Mammary epithelial cell (primary cell): ENCODE measurements at regions of chr11 and their contacts with region 1.

Region 1: DNA sequence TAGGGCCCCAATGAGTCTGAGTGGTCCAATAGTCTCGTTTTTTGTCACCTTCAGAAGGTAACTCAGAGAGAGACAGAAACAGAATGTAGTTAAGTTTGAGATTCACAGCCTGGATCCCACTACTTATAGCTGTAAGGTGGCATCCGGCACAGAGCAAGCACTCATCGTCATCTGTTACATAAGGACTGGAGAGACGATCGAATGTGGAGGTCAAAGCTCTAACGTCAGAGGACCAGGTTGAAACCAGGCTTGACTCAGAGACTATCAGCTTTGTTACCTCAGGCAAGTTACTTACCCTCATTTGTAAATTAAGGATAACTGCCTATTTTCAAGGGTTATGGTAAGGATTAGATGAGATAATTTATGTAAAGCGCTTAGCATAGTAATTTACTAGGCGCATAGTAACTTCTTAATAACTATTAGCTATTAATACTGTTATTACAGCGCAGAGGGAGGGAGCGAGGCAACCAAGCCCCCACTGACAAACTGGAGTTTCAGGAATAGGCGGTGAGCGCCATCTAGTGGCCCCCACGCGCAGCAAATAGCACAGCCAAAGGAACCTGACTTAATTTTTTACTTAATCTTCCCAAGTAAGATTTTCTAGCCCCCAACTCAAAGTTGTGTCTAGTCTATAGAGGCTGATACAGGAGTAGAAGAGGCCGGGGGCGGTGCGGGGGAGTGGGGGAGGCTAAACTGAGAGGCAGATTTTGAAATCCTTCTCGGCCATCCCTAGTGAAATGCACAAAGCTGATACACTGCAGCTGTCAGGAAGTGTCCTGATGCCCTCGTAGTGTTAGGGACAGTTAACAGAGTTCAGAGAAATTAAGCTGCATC is 29.0 kb upstream of the API5 start:
- DNase-seq: peak; percentile 6
- H3K4me3 ChIP-seq: no peak overlapping the region
- H3K27ac ChIP-seq: no peak overlapping the region
- H3K4me1 ChIP-seq: no peaks in the 10 kb centered on the region
- H3K27me3 ChIP-seq: peaks cover 2% of the 10 kb centered on the region
- CTCF ChIP-seq: peak; percentile 81 to 88

Region 2: GRCh38 chr11:41461057-41461681 is 1821.7 kb before region 1 on chr11:
- CTCF ChIA-PET with region 1: no interaction called
- dilution Hi-C with region 1: no loop called
- in situ Hi-C with region 1: loop called in 1 of 2 experiments (anchors 25 kb)
- intact Hi-C with region 1: no loop called
- DNase-seq: peak; percentile 9
- H3K4me3 ChIP-seq: no peak overlapping the region
- H3K27ac ChIP-seq: no peak overlapping the region
- H3K4me1 ChIP-seq: no peaks in the 10 kb centered on the region
- H3K27me3 ChIP-seq: peaks cover 18% of the 10 kb centered on the region
- CTCF ChIP-seq: peak; percentile 71 to 75

Region 3: DNA sequence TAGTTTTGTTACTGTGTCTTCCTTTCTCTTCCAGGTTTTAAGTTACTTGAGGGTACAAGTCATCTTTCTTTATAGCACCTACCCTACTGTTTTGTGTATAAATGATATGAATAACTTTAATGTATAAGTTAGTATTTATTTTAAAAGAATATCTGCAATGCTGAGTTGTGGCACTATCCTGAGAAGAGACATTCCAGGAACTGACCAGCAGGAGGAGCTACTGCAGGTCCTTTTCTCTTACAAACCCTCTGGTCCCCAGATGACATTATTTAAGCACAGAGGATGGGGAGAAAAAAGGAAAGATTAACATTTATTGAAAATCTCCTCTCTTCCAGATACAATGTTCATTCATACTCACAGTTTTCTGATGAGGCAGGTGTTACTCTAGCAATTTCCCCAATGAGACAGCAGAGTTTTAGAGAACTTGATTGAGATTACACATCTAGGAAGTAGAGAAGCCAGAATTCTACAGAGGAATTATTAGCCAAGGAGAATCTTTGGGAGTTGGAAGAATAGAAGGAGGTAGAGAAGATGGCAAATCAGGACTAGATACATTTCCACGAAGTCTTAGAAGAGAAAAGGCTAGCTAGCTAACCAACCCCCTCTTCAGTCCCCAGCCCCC is 512.3 kb before region 1 on chr11:
- CTCF ChIA-PET with region 1: interaction called, 4 read pairs
- dilution Hi-C with region 1: no loop called
- in situ Hi-C with region 1: loop called in 1 of 2 experiments (anchors 25 kb)
- intact Hi-C with region 1: loop called (anchors 1 kb)
- DNase-seq: peak; percentile 2
- H3K4me3 ChIP-seq: no peak overlapping the region
- H3K27ac ChIP-seq: no peak overlapping the region
- H3K4me1 ChIP-seq: no peaks in the 10 kb centered on the region
- H3K27me3 ChIP-seq: no peaks in the 10 kb centered on the region
- CTCF ChIP-seq: peak; percentile 57 to 69

Region 4: GRCh38 chr11:42967653-42968375 is 315.0 kb before region 1 on chr11:
- CTCF ChIA-PET with region 1: no interaction called
- dilution Hi-C with region 1: no loop called
- in situ Hi-C with region 1: no loop called
- intact Hi-C with region 1: no loop called
- DNase-seq: no peak
- H3K4me3 ChIP-seq: no peak overlapping the region
- H3K27ac ChIP-seq: no peak overlapping the region
- H3K4me1 ChIP-seq: no peaks in the 10 kb centered on the region
- H3K27me3 ChIP-seq: no peaks in the 10 kb centered on the region
- CTCF ChIP-seq: no peak

Region 5: DNA sequence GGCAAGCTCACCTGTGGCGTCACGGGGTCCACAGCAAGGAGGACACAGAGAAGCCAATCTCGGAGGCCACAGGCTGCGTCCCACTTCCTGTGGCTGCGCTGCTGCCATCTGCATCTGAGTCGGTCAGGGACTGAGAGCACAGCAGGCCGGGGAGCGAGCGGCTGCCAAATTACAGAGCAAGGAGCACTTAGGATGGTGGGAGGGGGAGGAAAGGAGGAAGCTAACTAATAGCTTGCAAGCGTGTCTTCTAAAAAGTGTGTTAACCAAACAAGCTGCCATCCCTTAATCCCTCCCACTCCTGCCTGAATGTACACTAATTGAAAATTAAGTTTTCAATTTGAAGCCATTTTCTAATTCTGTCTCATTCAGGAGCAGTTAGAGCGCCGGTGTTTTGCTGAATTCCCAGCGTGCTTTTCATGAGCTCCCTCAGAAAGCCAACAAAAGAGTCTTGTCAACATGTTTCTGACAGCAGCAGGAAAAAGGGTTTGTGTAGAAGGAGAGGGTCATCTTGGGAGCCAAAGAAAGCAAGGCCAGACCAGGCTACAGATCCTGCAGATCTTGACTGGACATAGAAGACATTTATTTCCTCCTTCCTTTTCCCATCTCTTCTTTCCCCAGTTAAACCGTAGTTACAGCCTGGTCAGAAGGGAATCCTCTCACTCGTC is 13.4 kb before region 1 on chr11:
- CTCF ChIA-PET with region 1: no interaction called
- dilution Hi-C with region 1: no loop called
- in situ Hi-C with region 1: no loop called
- intact Hi-C with region 1: no loop called
- DNase-seq: no peak
- H3K4me3 ChIP-seq: no peak overlapping the region
- H3K27ac ChIP-seq: no peak overlapping the region
- H3K4me1 ChIP-seq: no peaks in the 10 kb centered on the region
- H3K27me3 ChIP-seq: no peaks in the 10 kb centered on the region
- CTCF ChIP-seq: no peak